GM12878 (cell line): ENCODE measurements at regions of chr21 and their contacts with region 1.

Region 1: GRCh38 chr21:44873356-44874239 is at the start of gene PTTG1IP:
- DNase-seq: peak; percentile 94
- ATAC-seq: peak; percentile 84
- H3K4me3 ChIP-seq: peak within 1 kb of the TSS; percentile 92
- H3K27ac ChIP-seq: peak within 1 kb of the TSS; percentile 67
- H3K4me1 ChIP-seq: peaks cover 17% of the 10 kb centered on the region
- H3K27me3 ChIP-seq: no peaks in the 10 kb centered on the region
- CTCF ChIP-seq: no peak
- EP300 ChIP-seq: no peak
- POLR2A ChIP-seq: peak; percentile 87
- RAD21 ChIP-seq: no peak
- polyA plus RNA-seq, gene PTTG1IP: 2.4 to 10.4 TPM

Region 2: DNA sequence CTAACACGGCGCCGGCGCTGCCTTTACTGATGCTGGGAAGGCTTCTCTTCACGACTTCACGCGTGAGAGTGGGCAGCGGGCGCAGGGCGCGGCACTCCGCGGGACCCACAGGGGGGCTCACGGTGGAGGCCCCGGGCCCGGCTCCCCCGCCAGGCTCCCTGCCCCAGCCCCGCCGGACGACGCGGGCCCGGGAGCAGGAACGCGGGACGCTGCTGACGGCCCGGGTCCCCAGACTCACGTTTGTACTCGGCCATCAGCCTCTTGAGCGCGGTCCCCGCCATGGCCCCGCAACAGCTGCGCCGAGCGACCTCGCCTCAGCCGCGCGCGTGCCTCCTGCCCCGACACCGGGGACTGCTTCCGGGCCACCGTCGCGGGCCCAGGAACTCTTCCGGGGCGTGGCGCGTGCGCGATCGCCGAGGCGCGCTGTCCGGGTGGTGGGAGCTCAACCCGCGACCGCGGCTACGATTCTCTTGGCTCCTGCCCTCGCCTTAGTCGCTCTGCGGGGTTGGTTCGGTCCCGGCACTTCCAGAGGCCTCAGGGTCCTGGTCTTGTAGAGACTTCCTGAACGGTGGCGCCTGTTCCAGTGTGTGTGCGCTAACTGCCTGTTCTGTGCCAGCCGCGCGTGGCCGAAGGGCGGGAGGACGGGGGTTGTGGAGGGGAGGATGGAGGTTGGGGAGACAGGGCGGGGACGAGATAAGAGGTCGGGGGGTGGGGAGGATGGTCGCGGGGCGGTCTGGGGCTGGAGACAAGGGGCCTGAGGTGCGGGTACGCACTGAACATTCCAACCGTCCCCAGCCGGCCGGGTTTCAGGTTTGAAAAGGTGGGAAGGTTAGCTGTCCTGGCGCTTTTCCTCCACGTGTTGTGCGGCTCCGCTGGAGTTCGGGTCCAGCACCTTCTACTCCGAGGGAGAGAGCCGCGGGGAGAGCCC is 71.9 kb before region 1 on chr21 and contains the start of gene UBE2G2:
- CTCF ChIA-PET with region 1: interaction called, 67 read pairs
- POLR2A ChIA-PET with region 1: interaction called, 15 read pairs
- RAD21 ChIA-PET with region 1: interaction called, 15 read pairs
- SMC1A ChIA-PET with region 1: interaction called, 22 read pairs
- in situ Hi-C with region 1: no loop called
- intact Hi-C with region 1: loop called (anchors 5 kb)
- DNase-seq: no peak
- ATAC-seq: peak; percentile 96
- H3K4me3 ChIP-seq: peak within 1 kb of the TSS; percentile 72
- H3K27ac ChIP-seq: peak within 1 kb of the TSS; percentile 71
- H3K4me1 ChIP-seq: peaks cover 12% of the 10 kb centered on the region
- H3K27me3 ChIP-seq: no peaks in the 10 kb centered on the region
- CTCF ChIP-seq: no peak
- EP300 ChIP-seq: no peak
- POLR2A ChIP-seq: peak; percentile 92
- RAD21 ChIP-seq: no peak
- polyA plus RNA-seq, gene UBE2G2: 27.0 to 32.0 TPM

Region 3: GRCh38 chr21:44817506-44817880 is 56.1 kb before region 1 on chr21:
- CTCF ChIA-PET with region 1: interaction called, 4 read pairs
- POLR2A ChIA-PET with region 1: interaction called, 3 read pairs
- RAD21 ChIA-PET with region 1: interaction called, 3 read pairs
- SMC1A ChIA-PET with region 1: no interaction called
- in situ Hi-C with region 1: no loop called
- intact Hi-C with region 1: loop called (anchors 5 kb)
- DNase-seq: no peak
- ATAC-seq: peak; percentile 91
- H3K4me3 ChIP-seq: peak overlapping the region; percentile 90
- H3K27ac ChIP-seq: peak overlapping the region; percentile 81
- H3K4me1 ChIP-seq: no peaks in the 10 kb centered on the region
- H3K27me3 ChIP-seq: no peaks in the 10 kb centered on the region
- CTCF ChIP-seq: no peak
- EP300 ChIP-seq: no peak
- POLR2A ChIP-seq: no peak
- RAD21 ChIP-seq: 0 out of 2 replicates have a peak, but pooled peaks have one; percentile 1